Breast epithelium (tissue), 4 donors: ENCODE measurements at regions of chr4 and their contacts with region 1.

Region 1: GRCh38 chr4:179182741-179183140 is 1740.5 kb upstream of the AGA start:
- DNase-seq: no peak
- H3K4me3 ChIP-seq: no peak overlapping the region
- H3K27ac ChIP-seq: no peak overlapping the region
- H3K4me1 ChIP-seq: no peaks in the 10 kb centered on the region
- H3K27me3 ChIP-seq: no peaks in the 10 kb centered on the region
- CTCF ChIP-seq: no peak
- POLR2A ChIP-seq: no peak

Region 2: GRCh38 chr4:179225594-179225993 is 42.9 kb after region 1 on chr4:
- intact Hi-C with region 1: loop called (anchors 2 kb)
- DNase-seq: no peak
- H3K4me3 ChIP-seq: no peak overlapping the region
- H3K27ac ChIP-seq: no peak overlapping the region
- H3K4me1 ChIP-seq: no peaks in the 10 kb centered on the region
- H3K27me3 ChIP-seq: no peaks in the 10 kb centered on the region
- CTCF ChIP-seq: no peak
- POLR2A ChIP-seq: no peak